ENCODE measurements at regions of chr16 and their contacts with region 1.

Region 1: GRCh38 chr16:48347980-48348379 is 37.2 kb downstream of the SIAH1 start:
- DNase-seq: no peak

Region 2: DNA sequence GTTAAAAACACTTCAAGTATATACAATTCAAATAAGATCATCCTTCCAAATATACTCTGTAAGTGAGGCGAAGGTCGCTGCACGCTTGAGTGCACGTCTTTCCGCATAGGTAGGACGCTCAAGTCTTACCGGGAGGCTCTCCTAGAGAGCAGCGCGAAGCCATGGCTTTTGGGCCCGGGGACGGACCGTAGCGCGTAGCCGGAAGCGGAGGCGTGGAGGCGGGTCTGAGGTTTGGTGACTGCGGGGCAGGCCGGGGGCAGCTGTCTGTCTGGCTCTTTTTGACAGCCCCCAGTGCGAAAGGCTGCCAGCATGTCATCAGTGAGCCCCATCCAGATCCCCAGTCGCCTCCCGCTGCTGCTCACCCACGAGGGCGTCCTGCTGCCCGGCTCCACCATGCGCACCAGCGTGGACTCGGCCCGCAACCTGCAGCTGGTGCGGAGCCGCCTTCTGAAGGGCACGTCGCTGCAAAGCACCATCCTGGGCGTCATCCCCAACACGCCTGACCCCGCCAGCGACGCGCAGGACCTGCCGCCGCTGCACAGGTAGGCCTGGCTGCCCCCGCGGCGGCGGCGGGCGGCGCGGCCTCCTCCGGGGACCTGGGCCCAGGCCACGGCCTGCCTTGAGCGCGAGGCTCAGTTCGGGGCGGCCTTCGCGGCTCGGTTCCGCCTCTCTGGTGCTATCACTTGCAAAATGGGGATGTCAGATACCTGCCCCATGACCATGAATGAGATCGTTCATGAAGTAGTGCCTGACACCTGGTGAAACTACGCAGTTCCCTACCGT is 103.7 kb before region 1 on chr16 and contains the start of gene LONP2:
- intact Hi-C with region 1: no loop called
- DNase-seq: peak; percentile 97
- total RNA-seq, gene LONP2: 56.5 to 64.9 TPM

Region 3: GRCh38 chr16:48256579-48257177 is 91.3 kb before region 1 on chr16:
- intact Hi-C with region 1: no loop called
- DNase-seq: no peak

Region 4: DNA sequence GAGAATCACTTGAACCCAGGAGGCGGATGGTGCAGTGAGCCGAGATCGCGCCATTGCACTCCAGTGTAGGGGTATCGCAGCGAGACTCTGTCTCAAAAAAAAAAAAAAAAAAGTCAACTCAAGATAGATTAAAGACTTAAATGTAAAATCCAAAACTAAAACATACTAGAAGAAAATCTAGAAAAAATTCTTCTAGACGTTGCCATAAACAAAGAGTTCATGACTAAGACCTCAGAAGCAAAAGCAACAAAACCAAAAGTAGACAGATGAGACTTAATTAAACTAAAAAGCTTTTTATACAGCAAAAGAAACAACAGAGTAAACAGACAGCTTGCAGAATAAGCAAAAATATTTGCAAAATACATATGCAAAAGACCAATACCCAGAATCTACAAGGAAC is 39.4 kb before region 1 on chr16:
- intact Hi-C with region 1: loop called in 1 of 2 experiments (anchors 2 kb)
- DNase-seq: no peak

Region 5: GRCh38 chr16:48434653-48435317 is 86.8 kb after region 1 on chr16:
- intact Hi-C with region 1: no loop called
- DNase-seq: no peak

Measured in posterior vena cava (tissue), 2 donors.